ENCODE measurements at regions of chr2 and their contacts with region 1.

Region 1: GRCh38 chr2:219010162-219010756 is 17.0 kb upstream of the CRYBA2 start:
- DNase-seq: no peak
- H3K4me3 Mint-ChIP-seq: no peak overlapping the region
- H3K27ac Mint-ChIP-seq: no peak overlapping the region
- H3K4me1 Mint-ChIP-seq: no peaks in the 10 kb centered on the region
- H3K27me3 Mint-ChIP-seq: peaks cover 11% of the 10 kb centered on the region

Region 2: DNA sequence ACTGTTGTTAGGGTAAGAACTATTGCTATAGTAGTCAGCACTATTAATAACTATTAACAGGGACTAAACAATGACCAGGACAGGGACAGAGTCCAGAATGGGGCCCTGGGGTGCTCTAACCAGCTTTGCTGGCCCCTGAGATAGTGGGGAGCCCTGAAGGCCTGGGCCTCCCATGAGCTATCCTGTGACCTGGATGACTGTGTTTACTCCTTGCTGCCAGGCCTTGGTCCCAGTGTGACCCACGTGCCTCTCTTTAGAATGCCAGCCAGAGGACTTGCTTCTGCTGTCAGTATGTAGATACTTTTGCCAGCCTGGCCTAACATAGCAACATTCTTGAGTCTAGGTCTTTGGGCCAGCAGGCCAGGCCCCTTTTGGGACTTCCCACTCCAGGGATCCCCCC is 39.4 kb before region 1 on chr2:
- CTCF ChIA-PET with region 1: no interaction called
- POLR2A ChIA-PET with region 1: no interaction called
- DNase-seq: no peak
- H3K4me3 Mint-ChIP-seq: no peak overlapping the region
- H3K27ac Mint-ChIP-seq: no peak overlapping the region
- H3K4me1 Mint-ChIP-seq: no peaks in the 10 kb centered on the region
- H3K27me3 Mint-ChIP-seq: peaks cover 51% of the 10 kb centered on the region

Region 3: GRCh38 chr2:218995972-218996711 is 14.1 kb before region 1 on chr2:
- CTCF ChIA-PET with region 1: interaction called, 12 read pairs
- POLR2A ChIA-PET with region 1: no interaction called
- DNase-seq: peak; percentile 74
- H3K4me3 Mint-ChIP-seq: no peak overlapping the region
- H3K27ac Mint-ChIP-seq: no peak overlapping the region
- H3K4me1 Mint-ChIP-seq: peaks cover 8% of the 10 kb centered on the region
- H3K27me3 Mint-ChIP-seq: peaks cover 81% of the 10 kb centered on the region

Region 4: DNA sequence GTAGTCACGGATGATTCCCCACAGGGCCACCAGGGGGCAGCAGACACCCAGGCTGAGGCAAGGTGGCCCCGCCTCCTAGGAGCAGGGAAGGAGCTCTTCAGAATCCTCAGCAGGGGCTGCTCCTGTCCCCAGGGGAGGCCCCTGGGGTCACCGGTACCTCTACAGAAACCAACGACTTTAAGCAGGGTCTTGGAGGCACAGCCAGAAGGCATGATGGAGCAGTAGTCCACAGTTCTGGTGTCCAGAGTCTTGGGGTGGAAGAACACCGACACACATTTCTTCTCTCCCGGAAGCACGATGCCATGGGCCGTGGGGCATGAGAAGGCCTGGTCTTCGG is 19.5 kb after region 1 on chr2:
- CTCF ChIA-PET with region 1: interaction called, 16 read pairs
- POLR2A ChIA-PET with region 1: no interaction called
- DNase-seq: peak; percentile 76
- H3K4me3 Mint-ChIP-seq: no peak overlapping the region
- H3K27ac Mint-ChIP-seq: no peak overlapping the region
- H3K4me1 Mint-ChIP-seq: no peaks in the 10 kb centered on the region
- H3K27me3 Mint-ChIP-seq: peaks cover 23% of the 10 kb centered on the region

Region 5: DNA sequence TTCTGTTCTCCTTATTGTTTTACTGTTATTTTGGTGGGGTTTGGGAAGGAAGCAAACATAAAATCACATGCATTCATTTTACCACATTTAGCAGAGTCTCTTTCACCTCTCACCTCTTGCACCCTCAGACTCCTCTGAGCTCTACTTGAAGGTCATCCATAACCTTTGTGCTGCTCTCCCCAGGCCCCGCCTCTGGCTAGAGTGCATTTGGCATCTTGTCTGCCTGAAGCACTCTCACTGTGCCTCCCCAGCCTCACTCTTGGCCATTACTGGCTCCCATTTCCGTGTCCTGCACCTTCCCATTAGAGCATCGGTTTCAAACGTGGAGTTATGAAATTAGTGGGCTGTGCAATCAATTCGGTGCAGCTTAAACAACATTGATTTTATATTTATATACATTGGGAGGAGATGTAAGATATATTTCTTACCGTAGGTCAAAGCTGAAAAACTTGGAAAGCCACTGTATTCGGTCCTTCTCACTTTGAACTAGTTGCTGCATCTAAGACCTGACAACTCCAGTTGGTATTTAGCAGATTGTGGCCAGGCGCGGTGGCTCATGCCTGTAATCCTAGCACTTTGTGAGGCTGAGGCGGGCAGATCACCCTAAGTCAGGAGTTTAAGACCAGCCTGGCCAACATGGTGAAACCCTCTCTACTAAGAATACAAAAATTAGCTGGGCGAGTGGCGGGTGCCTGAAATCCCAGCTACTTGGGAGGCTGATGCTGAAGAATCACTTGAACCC is 189.4 kb after region 1 on chr2:
- CTCF ChIA-PET with region 1: no interaction called
- POLR2A ChIA-PET with region 1: no interaction called
- DNase-seq: no peak
- H3K4me3 Mint-ChIP-seq: no peak overlapping the region
- H3K27ac Mint-ChIP-seq: no peak overlapping the region
- H3K4me1 Mint-ChIP-seq: peaks cover 5% of the 10 kb centered on the region
- H3K27me3 Mint-ChIP-seq: peaks cover 17% of the 10 kb centered on the region

Measured in activated CD4-positive, alpha-beta memory T cell treated with anti-CD3 and anti-CD28 coated beads, Interleukin-2, amount 10 ng/mL, durations not matched to agents 7 days and 5 days (primary cell).